PC-3 (cell line): ENCODE measurements at regions of chr11 and their contacts with region 1.

Region 1: DNA sequence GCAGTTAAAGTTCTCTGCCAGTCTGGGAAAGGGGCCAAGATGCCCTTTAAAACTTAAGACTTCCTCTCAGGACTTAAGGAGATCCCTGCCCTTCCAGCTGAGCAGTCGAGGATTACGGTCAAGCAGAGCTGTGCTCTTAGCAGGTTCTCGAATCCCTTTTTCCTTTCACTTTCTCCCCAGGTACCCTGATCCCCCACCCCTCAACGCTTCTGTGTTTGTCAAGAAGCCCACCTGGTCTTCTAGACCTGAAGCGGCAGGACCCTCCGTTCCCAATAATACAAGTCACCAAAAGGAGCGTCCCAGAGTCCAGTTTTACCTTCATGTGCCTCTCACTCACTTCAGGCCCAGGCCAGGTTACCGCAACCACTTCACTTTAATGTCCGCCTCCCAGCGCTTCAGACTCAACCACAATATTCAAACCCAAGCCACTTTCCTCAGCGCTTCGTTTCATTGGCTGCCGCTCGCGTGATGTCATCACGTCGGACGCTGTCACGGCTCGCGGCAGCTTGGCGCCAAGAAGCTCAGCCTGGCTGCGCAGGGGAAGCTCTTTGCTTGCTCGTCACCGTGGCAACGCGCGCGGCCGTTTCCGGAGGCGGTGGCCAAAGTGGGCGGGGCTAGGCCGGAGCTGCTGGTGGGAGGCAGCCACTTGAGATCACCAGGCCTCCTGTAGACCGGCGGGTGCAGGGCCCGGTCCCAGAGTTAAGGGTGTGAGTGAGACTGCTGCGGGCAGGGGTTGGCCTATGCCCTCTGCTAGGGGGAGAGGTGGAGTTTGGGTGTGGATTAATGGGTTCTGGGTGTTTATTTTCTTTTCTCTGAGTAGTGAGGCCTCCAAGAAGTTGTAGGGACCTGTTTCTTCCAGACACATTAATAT is at the starts of genes KIF18A and METTL15:
- DNase-seq: peak; percentile 99
- ATAC-seq: peak; percentile 82
- H3K4me3 ChIP-seq: peak within 1 kb of the TSS; percentile 75
- H3K27ac ChIP-seq: peak within 1 kb of the TSS; percentile 64
- H3K4me1 ChIP-seq: peaks cover 62% of the 10 kb centered on the region
- H3K27me3 ChIP-seq: no peaks in the 10 kb centered on the region
- CTCF ChIP-seq: no peak
- total RNA-seq, gene KIF18A: 11.6 and 15.3 TPM in 2 replicates
- total RNA-seq, gene METTL15: 5.8 and 12.4 TPM in 2 replicates

Region 2: GRCh38 chr11:27783701-27784355 is 324.2 kb before region 1 on chr11:
- CTCF ChIA-PET with region 1: no interaction called
- POLR2A ChIA-PET with region 1: no interaction called
- intact Hi-C with region 1: loop called (anchors 5 kb)
- DNase-seq: no peak
- ATAC-seq: no peak
- H3K4me3 ChIP-seq: no peak overlapping the region
- H3K27ac ChIP-seq: no peak overlapping the region
- H3K4me1 ChIP-seq: no peaks in the 10 kb centered on the region
- H3K27me3 ChIP-seq: no peaks in the 10 kb centered on the region
- CTCF ChIP-seq: no peak

Region 3: DNA sequence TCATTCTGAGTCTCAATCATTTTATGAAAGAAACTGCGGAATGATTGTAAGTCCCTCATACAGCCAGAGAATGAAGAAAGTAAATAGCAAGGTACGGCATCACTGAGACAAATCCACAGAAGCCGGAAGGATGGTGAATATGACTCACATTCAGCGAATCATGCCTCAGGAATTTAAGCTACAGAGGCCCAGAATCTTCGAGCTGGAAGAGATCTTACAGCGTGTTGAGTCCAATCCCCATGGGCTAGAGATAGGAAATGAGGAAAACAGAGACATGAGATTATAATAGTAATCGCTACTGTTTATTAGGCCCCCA is 173.2 kb before region 1 on chr11:
- CTCF ChIA-PET with region 1: no interaction called
- POLR2A ChIA-PET with region 1: interaction called, 12 read pairs
- intact Hi-C with region 1: loop called (anchors 1 kb)
- DNase-seq: peak; percentile 95
- ATAC-seq: peak; percentile 89
- H3K4me3 ChIP-seq: peak overlapping the region; percentile 33; the same call in 1 of the 2 replicates
- H3K27ac ChIP-seq: peak overlapping the region; percentile 95
- H3K4me1 ChIP-seq: peaks cover 29% of the 10 kb centered on the region
- H3K27me3 ChIP-seq: no peaks in the 10 kb centered on the region
- CTCF ChIP-seq: no peak

Region 4: DNA sequence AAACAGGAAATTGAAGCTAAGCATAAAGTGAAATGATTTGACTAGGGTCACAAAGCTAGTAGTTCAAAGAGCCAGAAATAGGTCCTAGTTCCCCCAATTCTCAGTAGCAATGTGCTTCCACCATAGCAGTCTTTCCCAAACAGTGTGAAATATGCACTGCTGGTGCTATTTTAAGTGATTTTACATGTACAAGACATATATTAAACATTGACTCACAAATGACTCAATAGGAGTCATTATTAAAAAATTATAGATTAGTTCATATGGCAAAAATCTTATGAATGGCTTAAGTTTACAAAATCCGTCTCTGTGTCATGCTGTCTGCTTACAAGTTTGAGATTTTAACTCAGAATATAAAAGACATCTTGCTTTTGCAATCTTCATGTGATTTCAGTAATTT is 21.4 kb before region 1 on chr11:
- CTCF ChIA-PET with region 1: no interaction called
- POLR2A ChIA-PET with region 1: interaction called, 10 read pairs
- intact Hi-C with region 1: no loop called
- DNase-seq: peak; percentile 80
- ATAC-seq: peak; percentile 70
- H3K4me3 ChIP-seq: no peak overlapping the region
- H3K27ac ChIP-seq: peak overlapping the region; percentile 74
- H3K4me1 ChIP-seq: peaks cover 41% of the 10 kb centered on the region
- H3K27me3 ChIP-seq: no peaks in the 10 kb centered on the region
- CTCF ChIP-seq: no peak

Region 5: DNA sequence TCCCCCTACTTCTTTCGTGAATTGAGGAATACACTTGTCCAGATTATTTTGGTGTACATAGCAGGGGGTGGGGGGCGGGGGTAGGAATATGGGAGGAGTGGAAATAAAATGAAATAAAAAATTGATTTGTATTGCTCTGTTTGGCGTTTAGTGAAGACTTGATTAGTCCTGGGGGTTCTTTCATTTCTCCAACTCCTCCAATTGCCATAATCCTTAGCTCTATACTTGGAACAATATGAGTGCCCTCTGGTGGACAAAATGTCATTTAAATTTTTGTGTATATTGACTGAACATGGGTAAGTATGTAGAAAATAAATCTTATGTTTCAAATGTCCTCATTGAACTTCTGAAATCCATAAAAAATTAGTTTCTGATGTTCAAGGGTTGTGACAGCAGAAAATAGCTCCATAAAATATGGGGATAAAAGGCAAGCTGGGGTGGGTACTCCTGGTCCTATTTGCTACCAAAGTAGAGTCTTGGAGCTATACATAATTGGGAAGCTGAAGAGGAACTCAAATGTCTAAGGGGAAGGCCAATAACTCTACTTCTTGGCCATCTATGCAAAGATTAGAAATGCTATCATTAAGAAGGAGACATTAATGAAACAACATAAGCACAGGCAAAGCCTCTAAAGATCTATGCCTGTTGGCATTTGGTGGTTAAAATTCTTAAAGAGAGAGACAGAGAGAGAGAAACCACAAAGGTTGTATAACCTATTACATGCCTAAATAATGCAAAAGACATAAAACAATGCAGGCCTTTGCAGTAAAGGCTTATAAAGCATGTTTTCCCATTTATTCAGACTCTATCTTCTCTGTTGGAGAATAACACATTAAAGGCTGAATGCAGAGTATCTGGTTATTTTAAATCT is 421.8 kb after region 1 on chr11:
- CTCF ChIA-PET with region 1: no interaction called
- POLR2A ChIA-PET with region 1: no interaction called
- intact Hi-C with region 1: loop called (anchors 5 kb)
- DNase-seq: peak; percentile 83
- ATAC-seq: peak; percentile 65
- H3K4me3 ChIP-seq: no peak overlapping the region
- H3K27ac ChIP-seq: no peak overlapping the region
- H3K4me1 ChIP-seq: peaks cover 7% of the 10 kb centered on the region
- H3K27me3 ChIP-seq: no peaks in the 10 kb centered on the region
- CTCF ChIP-seq: peak; percentile 68

Region 6: DNA sequence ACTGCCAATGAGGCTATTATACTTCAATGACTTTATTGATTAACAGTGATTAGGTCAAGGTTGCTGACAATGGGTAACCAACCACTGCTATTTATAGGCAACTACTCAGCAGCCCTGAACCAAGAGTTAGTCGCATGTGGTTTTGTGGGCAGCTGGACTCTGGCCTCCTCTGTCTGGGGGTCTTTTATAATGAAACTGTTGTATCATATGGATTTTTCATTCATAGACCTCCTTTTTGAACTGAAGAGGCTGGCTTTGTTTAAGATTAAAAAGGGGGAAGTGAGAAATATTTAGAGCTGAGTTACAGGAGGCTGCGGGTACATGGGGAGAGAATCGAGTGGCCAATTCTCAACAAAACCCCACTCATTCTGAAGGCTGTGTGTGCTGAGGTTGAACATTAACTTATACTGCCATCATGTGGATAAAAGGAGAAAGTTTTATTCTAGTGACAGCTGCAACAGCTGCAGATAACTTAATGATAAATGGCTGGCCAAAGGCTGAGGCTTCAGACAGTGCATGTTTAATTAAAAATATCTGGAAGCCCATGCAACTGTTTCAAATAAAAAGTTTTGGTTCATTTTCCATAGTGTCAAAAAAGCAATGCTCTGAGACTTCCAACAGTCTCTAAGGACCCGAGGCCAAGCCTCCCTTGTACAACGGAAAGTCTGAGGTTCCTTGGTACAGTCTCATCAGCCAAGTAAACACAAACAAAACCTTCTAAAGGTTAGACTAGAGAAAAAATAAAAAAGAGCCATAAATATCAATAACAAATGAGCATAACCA is 1226.2 kb after region 1 on chr11:
- CTCF ChIA-PET with region 1: no interaction called
- POLR2A ChIA-PET with region 1: no interaction called
- intact Hi-C with region 1: loop called (anchors 5 kb)
- DNase-seq: peak; percentile 70
- ATAC-seq: peak; percentile 90
- H3K4me3 ChIP-seq: no peak overlapping the region
- H3K27ac ChIP-seq: no peak overlapping the region
- H3K4me1 ChIP-seq: peaks cover 18% of the 10 kb centered on the region
- H3K27me3 ChIP-seq: no peaks in the 10 kb centered on the region
- CTCF ChIP-seq: peak; percentile 71